Gastrocnemius medialis (tissue), 4 donors: ENCODE measurements at regions of chr4 and their contacts with region 1.

Region 1: GRCh38 chr4:1856042-1856788 is at the start of gene LETM1:
- DNase-seq: peak; percentile 93 to 95
- ATAC-seq: peak; percentile 82 to 89
- H3K4me3 ChIP-seq: peak within 1 kb of the TSS; percentile 63 to 98 (median 78)
- H3K27ac ChIP-seq: peak within 1 kb of the TSS; percentile 72 to 94 (median 83)
- H3K4me1 ChIP-seq: peaks cover 32 to 43% of the 10 kb centered on the region in 2 donors
- H3K27me3 ChIP-seq: no peaks in the 10 kb centered on the region
- CTCF ChIP-seq: peak in 3 of 5 experiments; percentile 4 to 32 (median 10)
- POLR2A ChIP-seq: peak; percentile 70 to 78
- total RNA-seq, gene LETM1: 23.2 to 40.3 (median 33.6) TPM

Region 2: GRCh38 chr4:1346781-1347409 is 509.3 kb before region 1 on chr4 and contains the start of gene UVSSA:
- in situ Hi-C with region 1: no loop called
- intact Hi-C with region 1: loop called (anchors 10 kb)
- DNase-seq: peak; percentile 100
- ATAC-seq: peak; percentile 86 to 88
- H3K4me3 ChIP-seq: peak within 1 kb of the TSS; percentile 76 to 98 (median 88)
- H3K27ac ChIP-seq: peak within 1 kb of the TSS; percentile 88 to 99 (median 97)
- H3K4me1 ChIP-seq: peaks cover 20 to 31% of the 10 kb centered on the region in 2 donors
- H3K27me3 ChIP-seq: no peaks in the 10 kb centered on the region
- CTCF ChIP-seq: peak in 1 of 5 experiments; percentile 16
- POLR2A ChIP-seq: peak; percentile 92 to 97
- total RNA-seq, gene UVSSA: 8.5 to 13.2 (median 12.3) TPM

Region 3: GRCh38 chr4:1395941-1396806 is 460.0 kb before region 1 on chr4:
- in situ Hi-C with region 1: no loop called
- intact Hi-C with region 1: no loop called
- DNase-seq: no peak
- ATAC-seq: no peak
- H3K4me3 ChIP-seq: no peak overlapping the region
- H3K27ac ChIP-seq: no peak overlapping the region
- H3K4me1 ChIP-seq: no peaks in the 10 kb centered on the region
- H3K27me3 ChIP-seq: peaks cover 12 to 18% (median 17%) of the 10 kb centered on the region in 3 donors
- CTCF ChIP-seq: no peak
- POLR2A ChIP-seq: no peak

Region 4: DNA sequence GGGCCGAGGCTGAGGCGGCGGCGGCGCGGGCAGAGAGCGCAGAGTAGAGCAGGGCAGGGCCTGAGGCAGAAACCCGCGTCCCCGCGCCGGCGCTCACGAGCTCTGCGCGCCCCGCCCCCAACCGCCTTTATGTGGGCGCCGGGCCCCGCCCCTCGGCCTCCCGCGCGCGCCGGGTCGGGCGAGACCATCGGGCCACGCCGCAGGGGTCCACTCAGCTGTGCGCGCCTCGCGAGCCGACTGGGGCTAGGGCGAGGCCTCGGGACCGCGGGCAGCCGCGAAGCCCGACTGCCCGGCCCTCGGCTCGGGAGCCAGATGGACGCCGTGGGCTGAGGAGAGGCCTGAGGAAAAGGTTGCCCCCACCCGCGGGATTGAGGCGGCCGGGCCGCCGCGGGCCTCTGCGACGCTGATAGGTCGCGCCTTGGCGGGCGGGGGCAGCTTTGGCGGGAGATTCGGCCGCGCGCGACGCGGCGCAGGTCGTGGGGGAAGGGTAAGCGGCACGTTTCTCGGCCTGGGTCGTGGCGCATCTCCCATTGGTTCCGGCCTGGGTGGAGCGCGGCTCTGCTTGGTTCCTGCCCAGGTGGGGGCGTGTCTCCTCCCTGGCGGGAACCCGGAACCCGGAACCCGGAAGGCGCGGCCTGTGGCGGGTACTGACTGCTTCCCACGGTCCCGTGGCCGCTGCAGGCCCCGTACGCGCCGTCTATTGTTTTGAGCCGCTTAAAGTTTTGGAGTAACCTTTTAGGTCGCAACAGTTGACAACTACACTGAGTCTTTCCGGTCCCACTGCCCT is 143.8 kb before region 1 on chr4 and contains the start of gene SLBP:
- in situ Hi-C with region 1: no loop called
- intact Hi-C with region 1: loop called (anchors 5 kb)
- DNase-seq: peak; percentile 93 to 94
- ATAC-seq: peak; percentile 87 to 89
- H3K4me3 ChIP-seq: peak within 1 kb of the TSS; percentile 66 to 77 (median 74)
- H3K27ac ChIP-seq: peak within 1 kb of the TSS; percentile 91 to 96 (median 95)
- H3K4me1 ChIP-seq: peaks cover 18 to 25% of the 10 kb centered on the region in 2 donors
- H3K27me3 ChIP-seq: no peaks in the 10 kb centered on the region
- CTCF ChIP-seq: peak in 1 of 5 experiments; percentile 24
- POLR2A ChIP-seq: peak; percentile 94 to 95
- total RNA-seq, gene SLBP: 17.0 to 25.6 (median 21.0) TPM

Region 5: DNA sequence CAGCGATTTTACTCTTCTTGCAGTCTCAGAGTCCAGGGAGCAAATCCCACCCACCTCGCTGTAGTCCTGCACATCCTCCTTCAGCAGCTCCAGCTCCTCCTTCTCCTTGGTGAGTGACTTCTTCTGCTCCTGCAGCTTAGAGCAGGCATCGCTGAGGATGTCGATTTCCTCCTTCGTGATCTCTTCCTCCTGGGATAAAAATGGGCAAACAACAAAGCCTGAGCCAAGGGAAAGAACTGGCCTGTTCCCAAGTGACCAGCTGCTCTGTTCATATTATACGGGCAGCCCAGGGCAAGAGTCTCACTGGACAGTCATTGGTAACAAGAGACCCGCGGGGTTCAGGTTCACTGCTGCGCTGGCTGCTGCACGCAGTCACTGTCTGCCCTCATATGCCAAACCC is 36.9 kb before region 1 on chr4:
- in situ Hi-C with region 1: no loop called
- intact Hi-C with region 1: loop called (anchors 2 kb)
- DNase-seq: peak; percentile 77 to 85
- ATAC-seq: peak; percentile 95 to 96
- H3K4me3 ChIP-seq: no peak overlapping the region
- H3K27ac ChIP-seq: peak overlapping the region; percentile 65 to 72 (median 68)
- H3K4me1 ChIP-seq: peaks cover 16 to 20% of the 10 kb centered on the region in 2 donors
- H3K27me3 ChIP-seq: no peaks in the 10 kb centered on the region
- CTCF ChIP-seq: no peak
- POLR2A ChIP-seq: no peak

Region 6: GRCh38 chr4:1899149-1900086 is 43.2 kb after region 1 on chr4:
- in situ Hi-C with region 1: no loop called
- intact Hi-C with region 1: loop called (anchors 2 kb)
- DNase-seq: peak; percentile 42 to 54
- ATAC-seq: peak; percentile 86 to 94
- H3K4me3 ChIP-seq: no peak overlapping the region
- H3K27ac ChIP-seq: no peak overlapping the region
- H3K4me1 ChIP-seq: no peaks in the 10 kb centered on the region
- H3K27me3 ChIP-seq: no peaks in the 10 kb centered on the region
- CTCF ChIP-seq: peak; percentile 69 to 91 (median 87)
- POLR2A ChIP-seq: no peak